WTC11 (cell line): ENCODE measurements at regions of chr1 and their contacts with region 1.

Region 1: DNA sequence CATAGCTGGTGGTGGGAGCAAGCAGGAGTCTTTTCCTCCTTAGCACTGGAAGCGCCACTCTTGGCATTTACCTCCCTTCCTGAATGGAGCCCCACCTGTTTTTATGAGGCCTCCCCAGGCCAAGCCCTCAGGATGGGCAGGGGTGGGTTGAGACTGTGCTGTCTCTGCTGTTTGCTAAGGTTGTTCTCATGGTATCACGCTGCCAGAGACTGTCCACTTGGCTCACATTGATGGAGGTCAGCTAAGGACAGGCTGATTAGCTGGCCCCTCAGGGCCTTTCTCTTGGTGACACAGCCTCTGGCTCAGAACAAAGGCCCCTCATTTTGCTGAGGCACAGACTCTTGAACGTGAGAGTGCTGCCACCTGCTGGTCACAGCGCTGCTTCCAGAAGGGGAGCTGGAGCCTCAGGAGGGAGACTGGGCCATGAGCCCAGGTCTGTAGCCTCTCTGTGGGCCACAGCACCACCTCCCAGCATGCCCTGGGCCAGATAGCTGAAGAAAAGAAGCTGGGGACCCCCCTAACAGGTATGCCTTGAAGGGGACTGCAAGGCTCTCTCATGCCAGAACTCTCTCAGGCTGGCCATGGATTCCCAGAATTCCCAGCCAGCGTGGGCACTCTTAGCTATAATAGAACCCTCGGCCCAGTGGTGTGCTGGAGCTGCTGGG is 85.6 kb downstream of the CD58 start:
- DNase-seq: peak; percentile 94
- ATAC-seq: peak; percentile 97
- H3K4me3 Mint-ChIP-seq: no peak overlapping the region
- H3K27ac Mint-ChIP-seq: no peak overlapping the region
- H3K4me1 Mint-ChIP-seq: peaks cover 11% of the 10 kb centered on the region
- H3K27me3 Mint-ChIP-seq: no peaks in the 10 kb centered on the region
- CTCF ChIP-seq: peak; percentile 81

Region 2: GRCh38 chr1:116167625-116168276 is 317.5 kb before region 1 on chr1:
- CTCF ChIA-PET with region 1: interaction called, 13 read pairs
- POLR2A ChIA-PET with region 1: no interaction called
- DNase-seq: peak; percentile 21
- ATAC-seq: peak; percentile 39
- H3K4me3 Mint-ChIP-seq: peak overlapping the region; percentile 79
- H3K27ac Mint-ChIP-seq: no peak overlapping the region
- H3K4me1 Mint-ChIP-seq: peaks cover 24% of the 10 kb centered on the region
- H3K27me3 Mint-ChIP-seq: peaks cover 28% of the 10 kb centered on the region
- CTCF ChIP-seq: no peak

Region 3: DNA sequence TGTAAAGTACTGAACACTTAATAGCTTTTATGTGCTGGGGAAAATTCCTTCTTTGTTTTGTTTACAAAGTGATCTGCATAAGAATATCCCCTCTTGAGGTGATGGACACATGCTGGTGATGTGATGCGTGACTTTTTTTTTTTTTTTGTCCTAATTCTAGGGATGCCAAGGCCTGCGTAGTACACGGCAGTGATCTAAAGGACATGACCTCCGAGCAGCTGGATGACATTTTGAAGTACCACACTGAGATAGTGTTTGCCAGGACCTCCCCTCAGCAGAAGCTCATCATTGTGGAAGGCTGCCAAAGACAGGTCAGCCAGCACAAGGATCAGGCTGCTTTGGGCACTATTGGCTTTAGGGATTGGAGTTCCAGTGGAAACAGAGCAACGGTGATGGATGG is 87.5 kb before region 1 on chr1:
- CTCF ChIA-PET with region 1: interaction called, 30 read pairs
- POLR2A ChIA-PET with region 1: no interaction called
- DNase-seq: no peak
- ATAC-seq: peak; percentile 55; the same call in 1 of the 2 replicates
- H3K4me3 Mint-ChIP-seq: no peak overlapping the region
- H3K27ac Mint-ChIP-seq: no peak overlapping the region
- H3K4me1 Mint-ChIP-seq: peaks cover 17% of the 10 kb centered on the region
- H3K27me3 Mint-ChIP-seq: no peaks in the 10 kb centered on the region
- CTCF ChIP-seq: no peak

Region 4: GRCh38 chr1:116418091-116418830 is 66.9 kb before region 1 on chr1:
- CTCF ChIA-PET with region 1: interaction called, 62 read pairs
- POLR2A ChIA-PET with region 1: no interaction called
- DNase-seq: peak; percentile 86
- ATAC-seq: peak; percentile 80
- H3K4me3 Mint-ChIP-seq: peak overlapping the region; percentile 87
- H3K27ac Mint-ChIP-seq: no peak overlapping the region
- H3K4me1 Mint-ChIP-seq: peaks cover 29% of the 10 kb centered on the region
- H3K27me3 Mint-ChIP-seq: peaks cover 3% of the 10 kb centered on the region; the same call in 1 of the 2 replicates
- CTCF ChIP-seq: no peak

Region 5: GRCh38 chr1:116472431-116472961 is 12.7 kb before region 1 on chr1:
- CTCF ChIA-PET with region 1: interaction called, 24 read pairs
- POLR2A ChIA-PET with region 1: no interaction called
- DNase-seq: no peak
- ATAC-seq: no peak
- H3K4me3 Mint-ChIP-seq: no peak overlapping the region
- H3K27ac Mint-ChIP-seq: no peak overlapping the region
- H3K4me1 Mint-ChIP-seq: peaks cover 13% of the 10 kb centered on the region
- H3K27me3 Mint-ChIP-seq: no peaks in the 10 kb centered on the region
- CTCF ChIP-seq: no peak

Region 6: DNA sequence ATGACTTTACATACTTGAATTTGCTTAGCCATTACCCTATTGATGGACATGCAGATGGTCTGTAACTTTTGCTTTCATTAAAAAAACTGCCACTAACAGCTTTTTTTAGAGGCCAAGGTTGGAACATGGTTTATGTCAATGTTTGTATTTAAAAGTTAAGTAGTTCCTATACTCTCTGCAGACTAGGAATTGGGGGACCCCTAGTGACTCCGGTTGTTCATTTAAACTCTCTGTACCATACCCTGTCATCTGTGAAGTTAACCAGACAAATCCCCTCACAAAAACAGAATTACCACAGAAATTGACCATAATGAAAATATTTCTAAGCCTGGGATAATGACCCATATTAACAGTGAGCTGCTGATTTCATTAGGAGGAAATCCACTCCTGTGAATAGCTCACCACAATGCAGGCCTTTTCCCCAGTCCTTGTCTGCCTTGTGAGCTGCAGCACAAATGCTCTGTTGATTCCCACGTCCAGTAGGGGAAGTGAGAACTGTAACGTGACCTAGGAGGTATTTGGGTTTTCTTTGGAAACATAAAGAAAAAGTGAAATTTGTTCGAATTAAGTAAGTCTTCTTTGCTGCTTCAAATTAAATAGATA is 486.2 kb after region 1 on chr1:
- CTCF ChIA-PET with region 1: no interaction called
- POLR2A ChIA-PET with region 1: no interaction called
- DNase-seq: no peak
- ATAC-seq: peak; percentile 60; the same call in 1 of the 2 replicates
- H3K4me3 Mint-ChIP-seq: no peak overlapping the region
- H3K27ac Mint-ChIP-seq: no peak overlapping the region
- H3K4me1 Mint-ChIP-seq: peaks cover 9% of the 10 kb centered on the region
- H3K27me3 Mint-ChIP-seq: no peaks in the 10 kb centered on the region
- CTCF ChIP-seq: no peak